ENCODE measurements at regions of chr20 and their contacts with region 1.

Region 1: GRCh38 chr20:57654363-57654997 is 34.3 kb upstream of the ZBP1 start:
- DNase-seq: peak; percentile 78
- H3K4me3 ChIP-seq: no peak overlapping the region
- H3K27ac ChIP-seq: no peak overlapping the region
- H3K4me1 ChIP-seq: peaks cover 14% of the 10 kb centered on the region
- CTCF ChIP-seq: peak; percentile 96

Region 2: GRCh38 chr20:57190363-57191264 is 463.9 kb before region 1 on chr20:
- CTCF ChIA-PET with region 1: no interaction called
- POLR2A ChIA-PET with region 1: no interaction called
- intact Hi-C with region 1: no loop called
- DNase-seq: no peak
- H3K4me3 ChIP-seq: no peak overlapping the region
- H3K27ac ChIP-seq: no peak overlapping the region
- H3K4me1 ChIP-seq: no peaks in the 10 kb centered on the region
- CTCF ChIP-seq: no peak

Region 3: DNA sequence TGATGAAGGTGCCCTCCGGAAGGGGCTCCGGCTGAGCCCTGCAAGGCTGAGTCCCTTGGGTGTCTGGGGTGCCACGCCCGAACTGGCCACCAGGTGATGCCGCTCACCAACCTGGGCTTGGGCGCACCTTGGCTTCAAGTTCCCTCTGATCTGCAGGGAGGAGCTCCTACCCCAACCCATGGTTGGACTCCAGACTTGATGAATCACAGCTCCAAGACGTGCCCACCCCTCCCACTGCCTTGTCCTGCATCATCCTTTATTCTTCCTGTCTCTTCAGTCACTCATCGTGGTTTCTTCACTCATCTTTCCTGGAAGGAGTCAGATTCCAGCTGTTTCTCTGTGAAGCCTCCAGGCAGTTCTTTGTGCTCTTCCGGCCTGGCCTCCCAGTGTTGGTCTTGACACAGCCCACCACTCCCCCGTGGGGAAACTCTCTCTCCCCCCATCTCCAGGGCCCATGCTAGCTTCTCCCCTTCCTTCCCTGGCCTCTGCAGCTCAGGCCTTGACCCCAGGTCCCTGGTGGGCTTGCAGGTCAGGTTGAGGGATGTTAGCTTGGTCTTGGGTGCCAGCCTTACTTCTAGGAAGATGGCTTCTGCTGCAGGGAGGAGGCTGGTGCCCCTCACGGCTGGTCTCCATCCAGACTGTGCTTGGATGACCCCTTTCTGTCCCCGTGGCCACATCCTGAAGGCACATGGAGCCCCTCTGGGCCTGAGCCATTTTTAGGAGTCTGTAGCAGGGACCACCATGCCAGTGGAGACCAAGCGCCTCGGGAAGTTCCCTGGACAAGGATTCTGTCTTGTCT is 31.7 kb before region 1 on chr20:
- CTCF ChIA-PET with region 1: interaction called, 7 read pairs
- POLR2A ChIA-PET with region 1: interaction called, 4 read pairs
- intact Hi-C with region 1: loop called (anchors 1 kb)
- DNase-seq: peak; percentile 83
- H3K4me3 ChIP-seq: no peak overlapping the region
- H3K27ac ChIP-seq: no peak overlapping the region
- H3K4me1 ChIP-seq: peaks cover 62% of the 10 kb centered on the region
- CTCF ChIP-seq: peak; percentile 95

Region 4: GRCh38 chr20:57709931-57710799 is 55.7 kb after region 1 on chr20 and contains the start of gene PMEPA1:
- CTCF ChIA-PET with region 1: no interaction called
- POLR2A ChIA-PET with region 1: no interaction called
- intact Hi-C with region 1: loop called (anchors 2 kb)
- DNase-seq: peak; percentile 89
- H3K4me3 ChIP-seq: peak within 1 kb of the TSS; percentile 75
- H3K27ac ChIP-seq: peak within 1 kb of the TSS; percentile 34
- H3K4me1 ChIP-seq: peaks cover 47% of the 10 kb centered on the region
- CTCF ChIP-seq: 0 out of 2 replicates have a peak, but pooled peaks have one; percentile 25
- total RNA-seq, gene PMEPA1: 1.4 and 1.8 TPM in 2 replicates

Region 5: DNA sequence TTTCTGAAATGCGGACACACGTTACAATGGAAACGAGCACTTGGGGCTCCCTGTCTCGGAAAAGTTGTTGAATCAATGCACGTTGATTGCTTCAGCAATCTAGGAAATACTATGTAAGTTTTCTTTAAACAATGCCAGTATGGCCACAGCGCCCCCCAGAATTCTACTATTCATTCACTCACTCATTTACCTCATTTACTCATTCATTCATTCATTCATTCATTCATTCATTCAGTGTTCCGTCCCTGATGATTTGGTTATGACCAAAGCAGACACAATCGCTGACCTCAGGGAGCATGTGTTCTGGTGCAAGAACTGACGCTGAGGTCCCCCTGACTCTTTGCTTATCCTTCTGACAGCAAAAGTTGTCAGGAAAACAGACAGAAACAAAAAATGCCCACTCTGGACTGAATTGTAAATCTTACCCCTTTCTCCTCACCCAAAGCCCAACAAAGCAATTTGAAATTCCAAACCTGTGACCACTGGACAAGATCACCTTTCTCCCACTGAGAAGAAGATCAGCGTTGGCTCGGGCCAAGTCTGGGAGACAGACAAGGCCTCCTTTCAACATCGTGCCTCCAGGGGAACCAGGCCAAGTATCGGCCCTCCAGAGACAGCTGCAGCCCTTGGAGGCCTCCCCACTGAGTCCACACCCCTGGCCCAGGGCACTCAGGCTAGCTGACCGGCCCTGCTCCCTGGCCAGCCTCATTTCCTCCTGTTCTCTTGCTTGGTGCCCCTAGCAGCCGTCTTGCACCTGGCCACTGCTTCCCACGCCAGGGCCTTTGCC is 70.3 kb after region 1 on chr20:
- CTCF ChIA-PET with region 1: no interaction called
- POLR2A ChIA-PET with region 1: no interaction called
- intact Hi-C with region 1: no loop called
- DNase-seq: no peak
- H3K4me3 ChIP-seq: no peak overlapping the region
- H3K27ac ChIP-seq: no peak overlapping the region
- H3K4me1 ChIP-seq: no peaks in the 10 kb centered on the region
- CTCF ChIP-seq: no peak

Region 6: GRCh38 chr20:58087193-58087858 is 432.8 kb after region 1 on chr20:
- CTCF ChIA-PET with region 1: no interaction called
- POLR2A ChIA-PET with region 1: no interaction called
- intact Hi-C with region 1: loop called (anchors 2 kb)
- DNase-seq: peak; percentile 42
- H3K4me3 ChIP-seq: no peak overlapping the region
- H3K27ac ChIP-seq: no peak overlapping the region
- H3K4me1 ChIP-seq: no peaks in the 10 kb centered on the region
- CTCF ChIP-seq: peak; percentile 91

Region 7: DNA sequence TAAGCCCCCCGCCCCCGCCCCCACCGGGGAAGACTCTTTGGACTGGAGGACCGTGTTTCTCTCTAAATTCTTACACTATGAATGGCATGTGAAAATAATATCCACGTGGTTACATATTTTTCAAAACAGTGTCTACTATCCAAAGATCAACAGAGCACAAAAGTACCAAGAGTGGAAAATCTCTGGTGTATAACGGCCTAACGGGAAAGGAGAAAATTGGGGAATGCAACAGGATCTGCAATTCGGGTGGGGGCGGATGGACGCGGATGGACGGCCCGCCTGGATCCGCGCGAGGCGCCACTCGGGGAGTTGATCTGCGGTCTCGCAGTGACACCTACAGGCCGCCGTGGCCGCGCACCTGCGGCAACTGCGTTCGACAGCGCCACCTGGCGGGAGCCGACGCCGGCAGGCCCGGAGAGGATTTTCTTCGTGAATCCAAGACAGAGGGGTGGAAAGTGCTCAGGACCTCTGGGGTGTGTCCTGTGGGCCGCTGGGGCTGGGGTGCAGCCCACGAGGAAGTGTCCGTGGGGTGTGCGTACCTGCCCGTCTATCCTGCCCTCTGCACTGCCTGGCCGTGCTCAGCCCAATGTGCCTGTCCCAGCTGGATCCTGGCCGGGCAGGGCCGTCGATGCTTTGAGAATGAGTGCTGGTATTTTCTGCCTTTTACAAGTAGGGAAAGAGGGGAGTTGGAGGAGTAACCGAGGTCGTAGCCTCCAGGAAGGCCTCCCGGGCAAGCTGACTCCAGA is 555.3 kb after region 1 on chr20:
- CTCF ChIA-PET with region 1: no interaction called
- POLR2A ChIA-PET with region 1: no interaction called
- intact Hi-C with region 1: loop called (anchors 1 kb)
- DNase-seq: peak; percentile 77
- H3K4me3 ChIP-seq: no peak overlapping the region
- H3K27ac ChIP-seq: no peak overlapping the region
- H3K4me1 ChIP-seq: no peaks in the 10 kb centered on the region
- CTCF ChIP-seq: peak; percentile 100

Region 8: DNA sequence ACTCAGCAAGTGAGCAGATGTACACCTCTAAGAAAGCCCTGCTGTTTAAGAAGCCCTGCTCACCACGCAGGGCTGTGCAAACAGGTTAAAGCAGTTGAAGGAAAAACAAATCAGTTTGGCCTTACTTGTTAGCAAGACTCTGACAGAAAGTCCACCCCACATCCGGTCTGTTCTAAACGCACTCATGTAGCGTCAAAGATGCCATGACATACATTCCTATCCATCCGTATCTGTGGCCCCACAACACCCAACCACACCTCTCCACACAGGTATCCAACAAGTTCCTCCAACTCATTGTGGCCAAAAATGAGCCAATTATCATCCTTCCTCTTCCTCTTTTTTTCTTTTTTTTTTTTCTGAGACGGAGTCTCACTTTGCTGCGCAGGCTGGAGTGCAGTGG is 632.2 kb after region 1 on chr20:
- CTCF ChIA-PET with region 1: no interaction called
- POLR2A ChIA-PET with region 1: no interaction called
- intact Hi-C with region 1: no loop called
- DNase-seq: no peak
- H3K4me3 ChIP-seq: no peak overlapping the region
- H3K27ac ChIP-seq: no peak overlapping the region
- H3K4me1 ChIP-seq: no peaks in the 10 kb centered on the region
- CTCF ChIP-seq: no peak

Measured in OCI-LY7 (cell line).